K562 (cell line): ENCODE measurements at regions of chr2 and their contacts with region 1.

Region 1: DNA sequence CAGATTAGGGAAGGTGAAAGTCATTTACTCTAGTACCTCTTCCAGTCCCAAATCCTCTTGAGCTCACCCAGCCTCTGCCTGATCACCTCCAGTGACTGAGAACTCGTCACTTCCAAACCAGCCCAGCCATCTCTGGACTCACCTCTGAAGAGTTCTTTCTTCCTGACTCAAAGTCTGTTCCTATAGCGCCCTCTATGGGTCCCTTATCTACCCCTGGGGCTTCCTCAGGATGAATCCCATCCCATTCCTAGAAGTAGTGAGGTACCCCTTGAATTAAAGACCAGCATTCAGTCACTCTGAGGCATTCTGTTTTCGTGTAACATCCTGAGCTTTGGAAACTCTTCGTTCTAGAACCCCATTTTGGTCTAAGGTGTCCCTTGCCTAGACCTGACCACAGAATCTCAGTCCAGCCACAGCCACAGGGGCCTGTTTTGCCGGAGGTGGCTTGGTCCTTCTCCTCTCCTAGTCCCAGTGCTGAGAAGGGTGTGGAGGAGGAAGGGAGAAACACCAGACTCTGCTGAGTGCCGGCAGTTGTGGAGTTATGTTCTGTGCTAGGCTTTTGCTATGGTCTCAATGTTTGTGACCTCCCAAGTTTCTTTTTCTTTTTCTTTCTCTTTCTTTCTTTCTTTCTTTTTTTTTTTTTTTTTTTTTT is 32.7 kb downstream of the SIX3 start:
- DNase-seq: peak; percentile 59 to 68 (median 60)
- ATAC-seq: peak; percentile 86
- H3K4me3 ChIP-seq: no peak overlapping the region
- H3K27ac ChIP-seq: no peak overlapping the region
- H3K4me1 ChIP-seq: peaks cover 0 to 9% of the 10 kb centered on the region in 2 experiments; a peak in 2 of 5 replicates
- H3K27me3 ChIP-seq: peaks cover 10 to 42% of the 10 kb centered on the region in 2 experiments
- CTCF ChIP-seq: peak; percentile 61 to 79 (median 78); a peak in 5 of 6 replicates
- EP300 ChIP-seq: no peak
- POLR2A ChIP-seq: no peak
- RAD21 ChIP-seq: peak; percentile 32 to 67

Region 2: GRCh38 chr2:44397447-44398175 is 576.6 kb before region 1 on chr2:
- CTCF ChIA-PET with region 1: no interaction called
- POLR2A ChIA-PET with region 1: no interaction called
- in situ Hi-C with region 1: no loop called
- intact Hi-C with region 1: loop called (anchors 5 kb)
- DNase-seq: no peak
- ATAC-seq: no peak
- H3K4me3 ChIP-seq: no peak overlapping the region
- H3K27ac ChIP-seq: no peak overlapping the region
- H3K4me1 ChIP-seq: no peaks in the 10 kb centered on the region
- H3K27me3 ChIP-seq: no peaks in the 10 kb centered on the region
- CTCF ChIP-seq: no peak
- EP300 ChIP-seq: no peak
- POLR2A ChIP-seq: no peak
- RAD21 ChIP-seq: no peak

Region 3: GRCh38 chr2:45055162-45055605 is 81.0 kb after region 1 on chr2:
- CTCF ChIA-PET with region 1: no interaction called
- POLR2A ChIA-PET with region 1: no interaction called
- in situ Hi-C with region 1: no loop called
- intact Hi-C with region 1: no loop called
- DNase-seq: no peak
- ATAC-seq: no peak
- H3K4me3 ChIP-seq: no peak overlapping the region
- H3K27ac ChIP-seq: no peak overlapping the region
- H3K4me1 ChIP-seq: no peaks in the 10 kb centered on the region
- H3K27me3 ChIP-seq: peaks cover 0 to 21% of the 10 kb centered on the region in 2 experiments; a peak in 4 of 5 replicates
- CTCF ChIP-seq: no peak
- EP300 ChIP-seq: no peak
- POLR2A ChIP-seq: no peak
- RAD21 ChIP-seq: no peak